HEK293 (cell line): ENCODE measurements at regions of chr18 and their contacts with region 1.

Region 1: DNA sequence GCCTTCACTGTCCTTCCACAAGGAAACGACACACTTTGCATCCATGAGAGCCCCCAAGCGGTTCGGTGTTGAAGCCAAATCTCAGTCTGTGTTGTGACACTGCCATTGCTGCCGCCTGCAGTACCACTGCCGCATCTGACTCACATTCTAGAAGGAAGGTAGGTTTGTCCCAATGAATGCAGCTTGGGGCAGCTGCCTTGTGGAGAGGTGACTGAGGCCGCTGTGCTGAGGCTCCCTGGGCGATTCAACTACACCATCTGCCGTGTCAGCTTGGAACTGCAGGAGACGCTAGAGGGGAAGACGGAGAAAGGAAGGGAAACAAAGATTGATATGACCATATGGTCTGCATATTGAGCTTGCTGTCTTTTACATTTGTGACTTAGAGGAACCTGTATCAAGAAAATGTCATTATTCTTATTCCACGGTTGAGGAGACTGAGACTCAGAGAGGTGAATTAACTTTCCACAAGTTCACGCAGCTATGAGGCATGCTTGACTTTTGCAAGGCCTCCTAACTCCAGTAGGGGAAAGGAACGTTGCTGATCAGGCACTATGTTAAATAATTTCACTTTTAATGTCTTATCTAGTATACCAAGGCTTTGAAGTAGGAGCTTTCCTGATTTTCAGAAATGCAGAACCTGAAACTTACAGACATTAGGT is 43.5 kb upstream of the LMAN1 start:
- H3K4me3 ChIP-seq: no peak overlapping the region
- H3K27ac ChIP-seq: no peak overlapping the region
- H3K4me1 ChIP-seq: no peaks in the 10 kb centered on the region
- CTCF ChIP-seq: peak; percentile 100

Region 2: DNA sequence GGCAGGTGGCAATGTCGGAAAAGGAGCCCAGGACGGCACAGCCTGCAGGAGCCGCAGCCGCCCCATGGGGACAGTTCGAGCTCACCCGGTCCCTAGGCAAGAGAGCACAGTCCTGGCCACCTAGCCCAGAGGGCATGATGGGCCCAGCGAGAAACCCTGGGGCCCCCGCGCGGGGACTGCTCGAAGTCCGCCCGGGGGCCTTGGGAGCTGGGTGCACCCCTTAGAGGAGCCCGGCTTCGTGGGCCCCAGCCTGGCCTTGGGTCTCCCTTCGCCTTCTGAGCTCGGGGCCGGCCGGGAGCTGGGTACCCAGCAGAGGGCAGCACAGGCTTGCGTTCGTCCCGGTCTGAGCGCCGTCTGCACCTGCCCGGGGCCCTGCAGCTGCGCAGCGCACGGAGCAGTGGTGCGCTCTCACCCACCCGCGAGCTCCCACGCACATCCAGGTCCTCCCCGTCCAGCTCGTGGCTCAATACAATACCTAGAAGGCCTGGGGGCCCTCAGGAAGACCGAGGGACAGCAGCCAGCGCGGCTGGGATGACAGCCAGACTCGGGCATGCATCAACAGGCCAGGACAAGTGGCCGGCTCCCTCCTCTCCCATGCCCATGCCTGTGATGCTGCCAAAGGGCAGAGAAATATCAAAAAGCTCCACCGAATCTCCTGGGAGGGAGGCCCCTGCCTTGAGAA is 634.1 kb before region 1 on chr18:
- CTCF ChIA-PET with region 1: interaction called, 28 read pairs
- POLR2A ChIA-PET with region 1: no interaction called
- H3K4me3 ChIP-seq: peak overlapping the region; percentile 22
- H3K27ac ChIP-seq: no peak overlapping the region
- H3K4me1 ChIP-seq: peaks cover 2% of the 10 kb centered on the region; the same call in 1 of the 2 replicates
- CTCF ChIP-seq: peak; percentile 96

Region 3: GRCh38 chr18:59228351-59228750 is 174.2 kb before region 1 on chr18:
- CTCF ChIA-PET with region 1: interaction called, 18 read pairs
- POLR2A ChIA-PET with region 1: no interaction called
- H3K4me3 ChIP-seq: no peak overlapping the region
- H3K27ac ChIP-seq: no peak overlapping the region
- H3K4me1 ChIP-seq: peaks cover 3% of the 10 kb centered on the region; the same call in 1 of the 2 replicates
- CTCF ChIP-seq: no peak

Region 4: GRCh38 chr18:59268721-59269562 is 133.6 kb before region 1 on chr18:
- CTCF ChIA-PET with region 1: interaction called, 46 read pairs
- POLR2A ChIA-PET with region 1: interaction called, 4 read pairs
- H3K4me3 ChIP-seq: no peak overlapping the region
- H3K27ac ChIP-seq: no peak overlapping the region
- H3K4me1 ChIP-seq: peaks cover 6% of the 10 kb centered on the region; the same call in 1 of the 2 replicates
- CTCF ChIP-seq: no peak

Region 5: GRCh38 chr18:59308248-59308937 is 94.2 kb before region 1 on chr18:
- CTCF ChIA-PET with region 1: interaction called, 163 read pairs
- POLR2A ChIA-PET with region 1: interaction called, 6 read pairs
- H3K4me3 ChIP-seq: peak overlapping the region; percentile 41
- H3K27ac ChIP-seq: no peak overlapping the region
- H3K4me1 ChIP-seq: peaks cover 5% of the 10 kb centered on the region
- CTCF ChIP-seq: peak; percentile 94

Region 6: DNA sequence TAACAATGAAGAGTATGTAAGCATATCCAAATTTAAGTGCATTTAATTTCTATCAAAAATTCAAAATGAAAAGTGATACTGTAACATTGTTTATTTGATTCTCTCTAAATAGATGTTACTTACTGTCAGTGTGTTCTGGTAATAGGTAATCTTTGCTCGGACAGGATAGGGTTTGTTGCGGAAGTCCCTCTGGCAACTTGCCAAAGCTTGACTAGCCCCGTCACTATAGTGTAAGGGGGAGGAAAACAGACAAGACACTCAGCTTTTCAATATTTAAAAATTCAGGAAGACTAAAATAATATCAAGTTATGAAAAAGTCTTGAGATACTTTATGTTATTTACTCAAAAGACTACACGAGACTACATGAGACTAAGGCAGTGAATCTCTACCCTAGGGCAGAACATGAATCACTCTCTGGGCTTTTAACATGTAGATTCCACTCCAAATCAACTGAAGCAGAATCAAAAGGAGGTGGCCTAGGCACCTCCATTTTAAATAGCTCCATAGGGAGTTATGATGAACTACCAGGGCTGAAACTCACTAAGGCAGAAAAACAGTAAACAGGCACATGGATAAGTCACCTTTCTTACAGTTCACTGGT is 49.4 kb before region 1 on chr18:
- CTCF ChIA-PET with region 1: interaction called, 39 read pairs
- POLR2A ChIA-PET with region 1: no interaction called
- H3K4me3 ChIP-seq: no peak overlapping the region
- H3K27ac ChIP-seq: no peak overlapping the region
- H3K4me1 ChIP-seq: peaks cover 8% of the 10 kb centered on the region
- CTCF ChIP-seq: no peak

Region 7: GRCh38 chr18:59419386-59419785 is 16.8 kb after region 1 on chr18:
- CTCF ChIA-PET with region 1: interaction called, 15 read pairs
- POLR2A ChIA-PET with region 1: no interaction called
- H3K4me3 ChIP-seq: no peak overlapping the region
- H3K27ac ChIP-seq: no peak overlapping the region
- H3K4me1 ChIP-seq: no peaks in the 10 kb centered on the region
- CTCF ChIP-seq: no peak

Region 8: GRCh38 chr18:59639821-59640220 is 237.3 kb after region 1 on chr18:
- CTCF ChIA-PET with region 1: no interaction called
- POLR2A ChIA-PET with region 1: no interaction called
- H3K4me3 ChIP-seq: no peak overlapping the region
- H3K27ac ChIP-seq: no peak overlapping the region
- H3K4me1 ChIP-seq: peaks cover 11% of the 10 kb centered on the region; the same call in 1 of the 2 replicates
- CTCF ChIP-seq: no peak